Activated CD4-positive, alpha-beta T cell treated with anti-CD3 and anti-CD28 coated beads for 36 hours (primary cell): ENCODE measurements at regions of chr3 and their contacts with region 1.

Region 1: DNA sequence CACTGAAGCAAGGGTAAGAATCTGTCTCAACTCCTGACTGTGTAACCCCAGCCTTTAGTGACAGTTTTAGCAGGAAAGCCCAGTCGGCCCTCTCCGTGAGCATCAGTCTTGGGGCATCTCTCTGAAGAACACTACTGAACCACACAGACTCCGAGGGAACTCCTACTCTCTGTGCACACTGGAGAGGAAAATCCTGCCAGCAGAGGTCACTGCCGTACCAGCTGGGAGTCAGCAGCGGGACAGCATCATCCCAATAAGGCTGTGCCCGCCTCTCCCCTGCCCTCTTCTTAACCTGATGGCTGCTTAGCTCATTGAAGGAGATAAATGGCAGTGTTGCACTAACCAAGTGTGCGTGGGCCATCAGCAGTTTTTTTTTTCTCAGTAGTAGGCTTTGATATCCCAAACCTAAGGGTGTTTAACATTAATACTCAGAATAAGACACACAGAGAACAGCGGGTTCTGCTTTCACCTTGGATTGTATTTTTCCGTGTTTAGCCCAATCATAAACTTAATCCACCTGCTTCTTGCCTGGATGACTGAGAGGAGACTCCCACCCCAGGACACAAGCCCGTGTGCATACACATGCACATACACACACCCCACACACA is 26.6 kb upstream of the RASA2 start:
- DNase-seq: peak; percentile 96
- ATAC-seq: peak; percentile 100
- H3K4me3 Mint-ChIP-seq: no peak overlapping the region
- H3K27ac Mint-ChIP-seq: no peak overlapping the region
- H3K4me1 Mint-ChIP-seq: peaks cover 7% of the 10 kb centered on the region
- H3K27me3 Mint-ChIP-seq: no peaks in the 10 kb centered on the region

Region 2: GRCh38 chr3:141174674-141175073 is 285.5 kb before region 1 on chr3:
- CTCF ChIA-PET with region 1: no interaction called
- POLR2A ChIA-PET with region 1: no interaction called
- intact Hi-C with region 1: no loop called
- DNase-seq: no peak
- ATAC-seq: no peak
- H3K4me3 Mint-ChIP-seq: no peak overlapping the region
- H3K27ac Mint-ChIP-seq: no peak overlapping the region
- H3K4me1 Mint-ChIP-seq: no peaks in the 10 kb centered on the region
- H3K27me3 Mint-ChIP-seq: peaks cover 2% of the 10 kb centered on the region

Region 3: DNA sequence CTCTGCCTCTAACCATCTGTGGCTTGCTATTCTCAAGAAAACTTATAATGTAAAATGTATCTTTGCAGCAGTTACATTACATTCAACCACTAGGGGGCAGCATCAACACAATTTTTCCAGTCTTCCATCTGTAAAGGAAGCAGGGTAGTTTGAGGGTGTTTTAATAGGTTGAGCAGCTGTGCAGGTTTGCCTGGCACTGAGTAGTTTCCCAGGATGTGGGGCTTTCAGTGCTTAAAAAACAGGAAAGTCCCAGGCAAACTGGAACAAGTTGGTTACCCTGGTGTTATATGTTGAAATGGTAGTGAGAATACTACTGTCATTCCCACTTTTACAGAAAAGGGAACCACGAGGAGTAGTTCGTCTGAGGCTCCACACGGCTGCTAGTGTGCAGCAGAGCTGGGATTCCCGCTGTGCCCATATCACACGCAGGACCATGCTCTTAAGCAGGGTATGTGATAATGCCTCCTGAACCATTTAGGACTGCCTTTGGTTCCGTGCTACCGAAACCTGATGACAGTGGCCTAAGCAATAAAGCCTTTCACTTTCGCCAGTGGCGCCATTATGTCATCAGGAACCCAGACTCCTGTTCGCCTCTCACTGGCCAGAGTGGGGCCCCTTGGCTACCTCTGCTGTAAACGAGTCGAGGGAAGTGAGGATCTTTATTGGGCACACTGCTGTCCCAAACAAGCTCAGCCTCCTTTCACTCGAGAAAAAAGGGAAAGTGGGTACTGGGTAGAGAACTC is 156.5 kb before region 1 on chr3:
- CTCF ChIA-PET with region 1: interaction called, 111 read pairs
- POLR2A ChIA-PET with region 1: no interaction called
- intact Hi-C with region 1: loop called in 1 of 2 experiments (anchors 1 kb)
- DNase-seq: peak; percentile 70
- ATAC-seq: peak; percentile 48
- H3K4me3 Mint-ChIP-seq: no peak overlapping the region
- H3K27ac Mint-ChIP-seq: no peak overlapping the region
- H3K4me1 Mint-ChIP-seq: peaks cover 51% of the 10 kb centered on the region
- H3K27me3 Mint-ChIP-seq: no peaks in the 10 kb centered on the region

Region 4: GRCh38 chr3:141471160-141471559 is 11.0 kb after region 1 on chr3:
- CTCF ChIA-PET with region 1: interaction called, 82 read pairs
- POLR2A ChIA-PET with region 1: no interaction called
- intact Hi-C with region 1: no loop called
- DNase-seq: no peak
- ATAC-seq: no peak
- H3K4me3 Mint-ChIP-seq: no peak overlapping the region
- H3K27ac Mint-ChIP-seq: no peak overlapping the region
- H3K4me1 Mint-ChIP-seq: peaks cover 11% of the 10 kb centered on the region
- H3K27me3 Mint-ChIP-seq: no peaks in the 10 kb centered on the region

Region 5: DNA sequence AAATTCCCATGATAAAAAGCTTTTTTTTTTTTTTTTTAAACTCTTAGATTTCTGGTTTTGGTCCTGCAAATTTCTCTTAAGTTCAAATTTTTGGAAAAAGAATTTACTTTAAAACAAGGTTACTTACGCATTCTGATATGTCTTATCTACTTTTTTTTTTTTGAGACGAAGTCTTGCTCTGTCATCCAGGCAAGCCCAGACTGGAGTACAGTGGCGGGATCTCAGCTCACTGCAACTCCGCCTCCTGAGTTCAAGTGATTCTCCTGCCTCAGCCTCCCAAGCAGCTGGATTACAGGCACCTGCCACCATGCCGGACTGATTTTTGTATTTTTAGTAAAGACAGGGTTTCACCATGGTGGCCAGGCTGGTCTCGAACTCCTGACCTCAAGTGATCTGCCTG is 109.9 kb after region 1 on chr3:
- CTCF ChIA-PET with region 1: interaction called, 354 read pairs
- POLR2A ChIA-PET with region 1: no interaction called
- intact Hi-C with region 1: no loop called
- DNase-seq: no peak
- ATAC-seq: no peak
- H3K4me3 Mint-ChIP-seq: no peak overlapping the region
- H3K27ac Mint-ChIP-seq: no peak overlapping the region
- H3K4me1 Mint-ChIP-seq: peaks cover 11% of the 10 kb centered on the region
- H3K27me3 Mint-ChIP-seq: no peaks in the 10 kb centered on the region

Region 6: GRCh38 chr3:141796081-141796888 is 336.1 kb after region 1 on chr3:
- CTCF ChIA-PET with region 1: interaction called, 3 read pairs
- POLR2A ChIA-PET with region 1: no interaction called
- intact Hi-C with region 1: loop called in 1 of 2 experiments (anchors 5 kb)
- DNase-seq: peak; percentile 90
- ATAC-seq: peak; percentile 84
- H3K4me3 Mint-ChIP-seq: peak overlapping the region; percentile 77
- H3K27ac Mint-ChIP-seq: peak overlapping the region; percentile 97
- H3K4me1 Mint-ChIP-seq: peaks cover 52% of the 10 kb centered on the region
- H3K27me3 Mint-ChIP-seq: no peaks in the 10 kb centered on the region

Region 7: DNA sequence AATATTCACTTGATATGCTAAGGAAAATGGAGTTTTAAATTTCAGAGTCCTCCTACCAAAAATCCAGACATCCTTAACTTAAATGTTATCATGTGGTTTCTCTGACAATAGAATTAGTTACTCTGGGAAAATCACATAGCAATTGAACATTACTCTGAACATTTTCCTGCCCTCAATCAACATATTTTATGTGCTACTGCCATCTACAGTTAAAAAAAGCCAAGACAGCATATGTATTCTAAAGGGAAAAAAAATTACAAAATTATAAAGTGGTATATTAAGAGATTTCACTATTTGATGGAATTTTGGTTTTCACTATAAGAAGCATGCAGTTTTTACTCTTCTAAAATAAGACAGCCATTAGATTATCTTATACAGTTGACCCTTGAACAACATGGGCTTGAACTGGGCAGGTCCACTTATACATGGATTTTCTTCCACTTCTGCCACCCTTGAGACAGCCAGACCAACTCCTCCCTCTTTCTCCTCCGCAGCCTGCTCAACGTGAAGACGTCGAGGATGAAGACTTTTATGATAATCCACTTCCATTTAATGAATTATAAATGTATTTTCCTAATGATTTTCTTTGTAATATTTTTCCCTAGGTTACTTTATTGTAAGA is 538.6 kb after region 1 on chr3:
- CTCF ChIA-PET with region 1: no interaction called
- POLR2A ChIA-PET with region 1: no interaction called
- intact Hi-C with region 1: loop called in 1 of 2 experiments (anchors 10 kb)
- DNase-seq: no peak
- ATAC-seq: no peak
- H3K4me3 Mint-ChIP-seq: no peak overlapping the region
- H3K27ac Mint-ChIP-seq: no peak overlapping the region
- H3K4me1 Mint-ChIP-seq: no peaks in the 10 kb centered on the region
- H3K27me3 Mint-ChIP-seq: no peaks in the 10 kb centered on the region